Breast epithelium (tissue), 4 donors: ENCODE measurements at regions of chr10 and their contacts with region 1.

Region 1: GRCh38 chr10:13673156-13673555 is 86.4 kb downstream of the PRPF18 start:
- DNase-seq: no peak
- H3K4me3 ChIP-seq: no peak overlapping the region
- H3K27ac ChIP-seq: no peak overlapping the region
- H3K4me1 ChIP-seq: no peaks in the 10 kb centered on the region
- H3K27me3 ChIP-seq: no peaks in the 10 kb centered on the region
- CTCF ChIP-seq: no peak
- POLR2A ChIP-seq: no peak

Region 2: GRCh38 chr10:14024329-14025202 is 351.4 kb after region 1 on chr10:
- intact Hi-C with region 1: loop called (anchors 5 kb)
- DNase-seq: no peak
- H3K4me3 ChIP-seq: peak overlapping the region in 1 of 3 donors; percentile 13
- H3K27ac ChIP-seq: peak overlapping the region in 1 of 2 donors; percentile 21
- H3K4me1 ChIP-seq: no peaks in the 10 kb centered on the region
- H3K27me3 ChIP-seq: peaks cover 0 to 5% of the 10 kb centered on the region in 2 donors
- CTCF ChIP-seq: no peak
- POLR2A ChIP-seq: no peak